ENCODE measurements at regions of chr2 and their contacts with region 1.

Region 1: GRCh38 chr2:33134086-33134771 is 187.5 kb downstream of the LTBP1 start:
- H3K4me3 Mint-ChIP-seq: no peak overlapping the region
- H3K27ac Mint-ChIP-seq: no peak overlapping the region
- H3K4me1 Mint-ChIP-seq: peaks cover 31% of the 10 kb centered on the region
- H3K27me3 Mint-ChIP-seq: peaks cover 53% of the 10 kb centered on the region

Region 2: GRCh38 chr2:32926708-32927084 is 207.5 kb before region 1 on chr2:
- intact Hi-C with region 1: loop called (anchors 10 kb)
- H3K4me3 Mint-ChIP-seq: no peak overlapping the region
- H3K27ac Mint-ChIP-seq: no peak overlapping the region
- H3K4me1 Mint-ChIP-seq: no peaks in the 10 kb centered on the region
- H3K27me3 Mint-ChIP-seq: peaks cover 76% of the 10 kb centered on the region

Region 3: GRCh38 chr2:32946314-32947075 is 187.7 kb before region 1 on chr2 and contains the start of gene LTBP1:
- intact Hi-C with region 1: loop called (anchors 5 kb)
- H3K4me3 Mint-ChIP-seq: peak within 1 kb of the TSS; percentile 68
- H3K27ac Mint-ChIP-seq: no peak within 1 kb of the TSS
- H3K4me1 Mint-ChIP-seq: peaks cover 18% of the 10 kb centered on the region
- H3K27me3 Mint-ChIP-seq: peaks cover 84% of the 10 kb centered on the region

Measured in dendritic cell treated with granulocyte-macrophage colony-stimulating factor and Interleukin-4, amounts not matched to agents 40 ng/mL and 50 ng/mL, for 4 days (primary cell).